ENCODE measurements at regions of chr16 and their contacts with region 1.

Region 1: GRCh38 chr16:8928467-8928957 is 35.2 kb downstream of the USP7 start:
- DNase-seq: no peak
- H3K4me3 ChIP-seq: no peak overlapping the region
- H3K27ac ChIP-seq: no peak overlapping the region
- H3K4me1 ChIP-seq: peaks cover 15 to 50% (median 41%) of the 10 kb centered on the region in 4 donors
- H3K27me3 ChIP-seq: no peaks in the 10 kb centered on the region
- CTCF ChIP-seq: no peak
- EP300 ChIP-seq: no peak
- POLR2A ChIP-seq: no peak

Region 2: GRCh38 chr16:8469102-8469778 is 459.3 kb before region 1 on chr16:
- intact Hi-C with region 1: no loop called
- DNase-seq: no peak
- H3K4me3 ChIP-seq: no peak overlapping the region
- H3K27ac ChIP-seq: no peak overlapping the region
- H3K4me1 ChIP-seq: no peaks in the 10 kb centered on the region
- H3K27me3 ChIP-seq: no peaks in the 10 kb centered on the region
- CTCF ChIP-seq: no peak
- EP300 ChIP-seq: no peak
- POLR2A ChIP-seq: no peak

Region 3: GRCh38 chr16:9012848-9013507 is 84.5 kb after region 1 on chr16:
- intact Hi-C with region 1: loop called (anchors 10 kb)
- DNase-seq: peak in 1 of 2 donors; percentile 56
- H3K4me3 ChIP-seq: no peak overlapping the region
- H3K27ac ChIP-seq: no peak overlapping the region
- H3K4me1 ChIP-seq: peaks cover 6 to 19% (median 10%) of the 10 kb centered on the region in 4 donors
- H3K27me3 ChIP-seq: peaks cover 0 to 23% (median 5%) of the 10 kb centered on the region in 3 donors
- CTCF ChIP-seq: no peak
- EP300 ChIP-seq: no peak
- POLR2A ChIP-seq: no peak

Region 4: GRCh38 chr16:9594961-9595360 is 666.4 kb after region 1 on chr16:
- intact Hi-C with region 1: no loop called
- DNase-seq: no peak
- H3K4me3 ChIP-seq: no peak overlapping the region
- H3K27ac ChIP-seq: no peak overlapping the region
- H3K4me1 ChIP-seq: no peaks in the 10 kb centered on the region
- H3K27me3 ChIP-seq: peaks cover 0 to 7% (median 0%) of the 10 kb centered on the region in 3 donors
- CTCF ChIP-seq: no peak
- EP300 ChIP-seq: no peak
- POLR2A ChIP-seq: no peak

Measured in stomach (tissue), 19 donors.